Activated naive CD4-positive, alpha-beta T cell treated with anti-CD3 and anti-CD28 coated beads for 36 hours (primary cell): ENCODE measurements at regions of chr15 and their contacts with region 1.

Region 1: DNA sequence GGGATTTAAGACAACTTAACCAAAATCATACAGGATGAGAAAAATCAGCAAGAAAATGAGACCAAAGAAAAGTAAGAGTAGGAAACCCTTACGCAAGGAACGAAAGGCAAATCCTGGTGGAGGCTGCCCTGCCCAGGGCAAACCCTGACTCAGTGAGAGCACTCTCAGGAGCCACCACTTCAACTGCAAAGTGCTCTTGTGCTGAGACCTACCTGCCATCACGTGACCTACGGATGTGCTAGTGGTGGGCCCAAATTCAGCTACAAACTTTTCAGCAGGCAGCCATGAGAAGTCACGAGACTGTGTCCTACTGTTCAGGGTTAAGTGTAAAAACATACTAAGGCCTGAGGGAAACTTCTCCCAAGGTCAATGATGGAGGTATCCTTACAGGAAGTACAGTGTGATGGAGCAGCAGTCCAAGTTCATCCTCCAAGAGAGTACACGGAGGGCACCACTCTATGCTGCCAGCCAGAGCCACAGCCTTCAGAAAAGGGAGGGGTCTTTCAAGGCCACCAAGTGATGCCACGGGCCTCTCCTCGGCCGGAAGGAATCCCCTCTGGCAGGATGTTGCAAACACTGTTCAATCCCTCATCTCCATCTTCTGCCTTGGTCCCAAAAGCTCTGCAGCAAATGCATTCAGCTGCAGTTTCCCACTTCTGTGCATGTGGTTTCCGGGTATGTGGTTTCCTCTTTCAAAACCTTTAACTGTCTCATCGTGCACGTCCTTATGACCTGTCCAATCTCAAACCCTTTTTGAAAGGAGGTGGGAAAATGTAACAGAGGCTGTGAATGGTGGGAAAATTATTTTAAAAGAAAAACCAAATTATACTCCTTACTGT is 9.5 kb downstream of the CHSY1 start:
- DNase-seq: peak; percentile 81
- H3K4me3 Mint-ChIP-seq: no peak overlapping the region
- H3K27ac Mint-ChIP-seq: peak overlapping the region; percentile 76
- H3K4me1 Mint-ChIP-seq: peaks cover 79% of the 10 kb centered on the region
- H3K27me3 Mint-ChIP-seq: no peaks in the 10 kb centered on the region

Region 2: GRCh38 chr15:100918034-100918689 is 324.2 kb before region 1 on chr15:
- CTCF ChIA-PET with region 1: no interaction called
- intact Hi-C with region 1: loop called (anchors 5 kb)
- DNase-seq: peak; percentile 73
- H3K4me3 Mint-ChIP-seq: peak overlapping the region; percentile 74
- H3K27ac Mint-ChIP-seq: no peak overlapping the region
- H3K4me1 Mint-ChIP-seq: peaks cover 19% of the 10 kb centered on the region
- H3K27me3 Mint-ChIP-seq: peaks cover 64% of the 10 kb centered on the region

Region 3: GRCh38 chr15:101188637-101189408 is 53.6 kb before region 1 on chr15:
- CTCF ChIA-PET with region 1: no interaction called
- intact Hi-C with region 1: loop called (anchors 1 kb)
- DNase-seq: no peak
- H3K4me3 Mint-ChIP-seq: peak overlapping the region; percentile 1
- H3K27ac Mint-ChIP-seq: peak overlapping the region; percentile 73
- H3K4me1 Mint-ChIP-seq: peaks cover 75% of the 10 kb centered on the region
- H3K27me3 Mint-ChIP-seq: no peaks in the 10 kb centered on the region

Region 4: GRCh38 chr15:101206176-101206591 is 36.2 kb before region 1 on chr15:
- CTCF ChIA-PET with region 1: interaction called, 5 read pairs
- intact Hi-C with region 1: loop called (anchors 1 kb)
- DNase-seq: peak; percentile 89
- H3K4me3 Mint-ChIP-seq: peak overlapping the region; percentile 72
- H3K27ac Mint-ChIP-seq: peak overlapping the region; percentile 92
- H3K4me1 Mint-ChIP-seq: peaks cover 83% of the 10 kb centered on the region
- H3K27me3 Mint-ChIP-seq: no peaks in the 10 kb centered on the region

Region 5: GRCh38 chr15:101228313-101228712 is 14.1 kb before region 1 on chr15:
- CTCF ChIA-PET with region 1: interaction called, 4 read pairs
- intact Hi-C with region 1: loop called (anchors 2 kb)
- DNase-seq: no peak
- H3K4me3 Mint-ChIP-seq: no peak overlapping the region
- H3K27ac Mint-ChIP-seq: no peak overlapping the region
- H3K4me1 Mint-ChIP-seq: peaks cover 46% of the 10 kb centered on the region
- H3K27me3 Mint-ChIP-seq: no peaks in the 10 kb centered on the region

Region 6: DNA sequence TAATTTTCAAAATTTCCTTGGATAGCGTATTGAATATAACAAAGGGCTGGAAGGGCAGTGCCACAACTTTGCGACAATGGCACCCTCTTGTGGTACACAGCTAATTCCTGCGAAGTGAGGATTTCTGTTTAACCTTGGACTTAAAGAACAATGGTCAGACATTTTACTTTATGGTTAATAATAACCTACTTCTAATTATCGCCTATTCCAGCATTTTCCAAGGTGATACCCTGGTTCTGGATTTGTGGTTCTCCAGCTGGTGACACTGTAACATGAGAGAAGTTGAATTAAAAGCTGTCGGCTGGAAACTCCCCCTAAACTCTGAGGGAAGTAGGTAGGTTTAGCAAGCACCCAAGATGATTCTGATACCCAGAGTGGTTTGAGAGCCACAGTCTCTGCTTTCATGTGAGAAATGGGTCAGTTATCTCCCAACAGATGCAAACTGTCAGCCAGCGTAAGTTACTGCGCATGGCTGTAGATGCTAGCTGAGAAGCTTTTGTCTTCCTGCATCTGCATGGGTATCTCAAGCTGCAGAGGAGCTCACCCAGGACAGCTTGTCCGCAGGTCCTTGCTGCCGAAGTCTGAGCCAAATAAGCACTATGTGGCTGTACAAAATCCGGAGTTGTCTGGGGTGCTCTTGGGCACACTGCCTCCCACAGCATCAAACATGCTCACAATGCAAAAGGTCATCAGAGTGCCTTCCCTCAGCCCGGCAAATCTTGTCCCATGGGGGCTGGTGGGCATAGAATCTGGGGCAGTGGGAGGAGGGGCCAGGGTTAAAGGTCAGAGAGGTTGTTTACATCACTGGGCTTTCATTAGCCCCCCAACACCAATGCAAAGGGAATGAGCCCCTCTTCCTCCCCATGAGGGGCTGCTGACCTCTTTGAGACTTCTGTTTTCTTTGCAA is 16.1 kb after region 1 on chr15:
- CTCF ChIA-PET with region 1: interaction called, 17 read pairs
- intact Hi-C with region 1: no loop called
- DNase-seq: peak; percentile 73
- H3K4me3 Mint-ChIP-seq: no peak overlapping the region
- H3K27ac Mint-ChIP-seq: no peak overlapping the region
- H3K4me1 Mint-ChIP-seq: peaks cover 19% of the 10 kb centered on the region
- H3K27me3 Mint-ChIP-seq: peaks cover 6% of the 10 kb centered on the region